ENCODE measurements at regions of chr1 and their contacts with region 1.

Region 1: DNA sequence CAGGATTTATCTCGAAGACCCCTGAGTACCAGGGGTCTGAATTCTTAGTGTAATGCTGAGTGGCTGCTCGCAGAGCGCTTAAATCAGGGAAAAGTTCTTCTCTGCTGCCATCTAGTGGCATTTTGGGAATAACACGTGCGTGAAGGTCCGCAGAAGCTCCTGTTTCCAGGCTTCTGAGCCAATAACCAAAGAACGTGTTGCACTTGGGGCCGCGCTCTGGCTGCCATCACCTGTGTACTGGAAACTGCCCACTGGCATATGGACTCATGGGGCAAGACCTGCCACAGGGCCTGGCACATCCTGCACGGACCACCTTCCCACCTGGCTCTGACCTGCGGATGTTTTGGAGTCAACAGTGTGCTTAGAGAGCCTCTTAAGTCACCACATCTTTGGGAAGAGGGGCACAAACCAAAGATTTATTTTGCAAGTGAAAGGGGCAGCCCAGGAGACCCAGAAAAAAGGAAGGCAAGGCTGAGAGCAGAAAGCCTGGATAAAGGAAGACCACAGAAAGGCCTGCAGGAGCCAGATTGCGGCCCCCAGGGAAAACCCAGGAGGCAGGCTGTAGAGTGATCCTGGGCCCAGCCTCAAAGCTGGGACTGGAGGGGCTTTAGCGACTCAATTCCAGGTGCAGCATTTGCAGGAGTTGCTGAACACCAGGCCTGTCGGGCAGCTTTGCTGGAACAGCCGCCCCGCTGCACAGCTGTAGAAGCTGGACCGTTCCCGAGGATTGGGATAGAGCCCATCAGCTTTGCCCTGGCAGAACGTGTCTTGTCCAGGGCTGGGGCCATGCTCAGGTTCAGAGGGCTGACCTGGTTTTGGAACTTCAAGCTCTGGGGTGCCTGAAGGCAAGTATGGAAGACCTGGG is 13.0 kb downstream of the CHIT1 start:
- DNase-seq: peak; percentile 74
- H3K4me3 ChIP-seq: no peak overlapping the region; a peak in 1 of 4 replicates
- H3K27ac ChIP-seq: no peak overlapping the region
- H3K4me1 ChIP-seq: peaks cover 0 to 2% of the 10 kb centered on the region in 2 experiments; a peak in 1 of 4 replicates
- H3K27me3 ChIP-seq: peaks cover 18% of the 10 kb centered on the region
- CTCF ChIP-seq: peak; percentile 79
- EP300 ChIP-seq: no peak
- RAD21 ChIP-seq: peak; percentile 94

Region 2: GRCh38 chr1:202938287-202938925 is 278.1 kb before region 1 on chr1:
- CTCF ChIA-PET with region 1: no interaction called
- POLR2A ChIA-PET with region 1: no interaction called
- DNase-seq: no peak
- H3K4me3 ChIP-seq: no peak overlapping the region
- H3K27ac ChIP-seq: no peak overlapping the region
- H3K4me1 ChIP-seq: no peaks in the 10 kb centered on the region
- H3K27me3 ChIP-seq: no peaks in the 10 kb centered on the region
- CTCF ChIP-seq: no peak
- EP300 ChIP-seq: no peak
- RAD21 ChIP-seq: no peak

Region 3: GRCh38 chr1:203038891-203039608 is 177.5 kb before region 1 on chr1:
- CTCF ChIA-PET with region 1: interaction called, 454 read pairs
- POLR2A ChIA-PET with region 1: interaction called, 3 read pairs
- DNase-seq: peak; percentile 84
- H3K4me3 ChIP-seq: no peak overlapping the region; a peak in 1 of 4 replicates
- H3K27ac ChIP-seq: peak overlapping the region in 1 of 2 experiments; percentile 50; a peak in 1 of 4 replicates
- H3K4me1 ChIP-seq: peaks cover 20 to 42% of the 10 kb centered on the region in 2 experiments; a peak in 3 of 4 replicates
- H3K27me3 ChIP-seq: no peaks in the 10 kb centered on the region
- CTCF ChIP-seq: peak; percentile 97
- EP300 ChIP-seq: no peak
- RAD21 ChIP-seq: peak; percentile 93

Region 4: DNA sequence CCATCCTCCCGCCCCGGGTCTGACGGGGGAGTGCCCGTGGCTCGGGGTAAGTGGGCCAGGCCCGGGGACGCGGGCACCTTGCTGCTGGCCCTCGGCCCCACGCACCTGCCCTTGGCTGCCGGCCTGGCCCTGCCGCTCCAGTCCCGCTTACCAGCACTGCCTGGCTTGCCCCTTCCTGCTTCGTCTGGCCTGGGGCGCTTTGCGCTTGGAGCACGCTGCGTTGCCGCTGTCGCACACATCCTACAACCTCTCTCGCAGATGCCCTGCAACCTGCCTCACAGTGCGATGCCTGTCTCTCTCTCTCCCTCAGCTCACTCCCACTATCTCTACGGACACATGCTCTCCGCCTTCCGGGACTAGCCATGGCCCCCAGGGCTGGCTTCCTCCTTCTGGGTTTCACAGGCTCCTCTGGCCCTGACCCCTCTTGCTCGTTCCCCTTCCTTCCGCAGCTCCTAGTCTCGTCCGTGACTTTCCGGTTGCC is 140.4 kb before region 1 on chr1:
- CTCF ChIA-PET with region 1: interaction called, 11 read pairs
- POLR2A ChIA-PET with region 1: no interaction called
- DNase-seq: no peak
- H3K4me3 ChIP-seq: no peak overlapping the region
- H3K27ac ChIP-seq: no peak overlapping the region
- H3K4me1 ChIP-seq: no peaks in the 10 kb centered on the region
- H3K27me3 ChIP-seq: no peaks in the 10 kb centered on the region
- CTCF ChIP-seq: no peak
- EP300 ChIP-seq: no peak
- RAD21 ChIP-seq: no peak

Region 5: DNA sequence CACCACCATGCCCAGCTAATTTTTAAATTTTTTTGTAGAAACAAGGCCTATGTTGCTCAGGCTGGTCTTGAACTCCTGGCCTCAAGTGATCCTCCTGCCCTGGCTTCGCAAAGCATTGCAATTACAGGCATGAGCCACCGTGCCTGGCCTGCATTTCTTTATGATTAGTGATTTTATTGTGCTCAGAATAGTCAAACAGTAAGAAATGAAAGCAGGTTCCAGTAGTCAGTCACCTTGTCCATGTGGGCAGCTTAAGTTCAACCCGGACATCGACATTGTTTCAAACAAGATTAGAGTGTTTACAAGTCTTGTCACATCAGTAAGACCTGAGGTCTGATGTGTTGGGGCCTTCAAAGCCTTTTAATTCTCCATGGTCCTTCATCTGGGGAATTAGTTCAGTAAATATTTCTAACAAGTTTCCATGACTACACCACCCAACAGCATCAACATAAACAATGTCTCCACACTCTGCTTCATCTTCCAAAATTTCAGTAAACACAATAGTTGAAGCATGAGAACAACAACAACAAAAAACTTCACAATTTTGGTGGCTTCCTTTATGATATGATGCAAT is 104.1 kb before region 1 on chr1:
- CTCF ChIA-PET with region 1: interaction called, 602 read pairs
- POLR2A ChIA-PET with region 1: interaction called, 12 read pairs
- DNase-seq: no peak
- H3K4me3 ChIP-seq: no peak overlapping the region
- H3K27ac ChIP-seq: no peak overlapping the region
- H3K4me1 ChIP-seq: no peaks in the 10 kb centered on the region; a peak in 1 of 4 replicates
- H3K27me3 ChIP-seq: peaks cover 35% of the 10 kb centered on the region
- CTCF ChIP-seq: no peak
- EP300 ChIP-seq: no peak
- RAD21 ChIP-seq: no peak

Region 6: GRCh38 chr1:203148125-203148524 is 68.4 kb before region 1 on chr1:
- CTCF ChIA-PET with region 1: interaction called, 19 read pairs
- POLR2A ChIA-PET with region 1: no interaction called
- DNase-seq: no peak
- H3K4me3 ChIP-seq: no peak overlapping the region
- H3K27ac ChIP-seq: no peak overlapping the region
- H3K4me1 ChIP-seq: peaks cover 18 to 48% of the 10 kb centered on the region in 2 experiments; a peak in 3 of 4 replicates
- H3K27me3 ChIP-seq: no peaks in the 10 kb centered on the region
- CTCF ChIP-seq: peak; percentile 51
- EP300 ChIP-seq: no peak
- RAD21 ChIP-seq: no peak

Region 7: DNA sequence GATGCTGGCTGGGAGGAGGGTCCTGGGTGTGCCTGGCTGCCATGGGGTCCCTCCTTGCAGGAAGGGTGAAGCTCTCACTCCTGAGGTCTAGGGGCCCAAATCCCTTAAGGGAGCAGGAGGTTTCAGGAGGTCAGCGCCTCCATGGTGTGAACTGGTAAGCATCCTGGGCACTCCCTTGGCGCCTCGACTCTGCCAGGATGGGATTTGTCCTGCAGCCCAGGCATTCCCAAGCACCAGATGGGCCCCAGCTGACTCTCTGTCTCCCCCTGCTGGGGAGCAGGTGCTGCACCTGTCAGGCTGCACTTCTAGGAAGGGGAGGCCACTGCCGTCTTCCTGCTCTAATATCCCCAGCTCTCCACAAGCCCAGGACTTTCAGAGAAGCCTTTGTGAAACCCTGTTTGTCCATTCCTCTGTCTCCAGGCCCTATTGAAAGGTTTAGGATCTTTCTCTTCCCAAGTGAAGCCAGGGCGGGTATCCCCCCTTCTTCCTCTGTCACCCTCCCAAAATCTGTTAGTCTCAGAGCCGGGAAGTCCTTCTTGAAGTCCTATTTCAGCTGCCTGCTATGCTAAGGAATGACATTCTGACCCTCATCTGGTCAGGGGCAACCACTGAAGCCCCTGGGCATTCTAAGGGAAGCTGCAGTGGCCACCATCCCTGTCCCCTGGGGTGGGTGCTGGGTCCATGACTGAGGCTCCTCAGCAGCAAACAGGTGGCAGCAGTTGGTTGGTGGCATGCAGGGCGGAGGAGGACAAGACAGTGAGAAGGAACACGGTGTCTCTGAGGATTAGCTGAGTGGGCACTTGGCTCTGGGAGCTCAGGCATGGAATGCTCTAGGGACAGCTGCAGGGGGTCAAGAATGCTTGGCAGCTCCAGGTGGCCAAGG is 44.1 kb before region 1 on chr1:
- CTCF ChIA-PET with region 1: interaction called, 25 read pairs
- POLR2A ChIA-PET with region 1: no interaction called
- DNase-seq: peak; percentile 77
- H3K4me3 ChIP-seq: no peak overlapping the region
- H3K27ac ChIP-seq: no peak overlapping the region
- H3K4me1 ChIP-seq: peaks cover 5 to 7% of the 10 kb centered on the region in 2 experiments; a peak in 2 of 4 replicates
- H3K27me3 ChIP-seq: no peaks in the 10 kb centered on the region
- CTCF ChIP-seq: peak; percentile 69
- EP300 ChIP-seq: no peak
- RAD21 ChIP-seq: peak; percentile 66

Region 8: GRCh38 chr1:203229471-203230135 is 13.1 kb after region 1 on chr1 and contains the start of gene CHIT1:
- CTCF ChIA-PET with region 1: interaction called, 43 read pairs
- POLR2A ChIA-PET with region 1: no interaction called
- DNase-seq: no peak
- H3K4me3 ChIP-seq: no peak within 1 kb of the TSS
- H3K27ac ChIP-seq: no peak within 1 kb of the TSS
- H3K4me1 ChIP-seq: no peaks in the 10 kb centered on the region
- H3K27me3 ChIP-seq: peaks cover 38% of the 10 kb centered on the region
- CTCF ChIP-seq: no peak
- EP300 ChIP-seq: no peak
- RAD21 ChIP-seq: no peak
- polyA plus RNA-seq, gene CHIT1: not detected in 2 replicates

Measured in SK-N-SH (cell line).